ENCODE measurements at regions of chr11 and their contacts with region 1.

Region 1: GRCh38 chr11:22787551-22788162 is 41.9 kb downstream of the SVIP start:
- DNase-seq: peak in 2 of 3 donors; percentile 3 to 24
- H3K4me3 ChIP-seq: no peak overlapping the region
- H3K4me3 Mint-ChIP-seq: no peak overlapping the region
- H3K27ac ChIP-seq: no peak overlapping the region
- H3K27ac Mint-ChIP-seq: no peak overlapping the region
- H3K4me1 ChIP-seq: no peaks in the 10 kb centered on the region
- H3K4me1 Mint-ChIP-seq: no peaks in the 10 kb centered on the region
- H3K27me3 ChIP-seq: no peaks in the 10 kb centered on the region
- H3K27me3 Mint-ChIP-seq: peaks cover 0 to 2% (median 0%) of the 10 kb centered on the region in 3 donors
- CTCF ChIP-seq: peak; percentile 81

Region 2: DNA sequence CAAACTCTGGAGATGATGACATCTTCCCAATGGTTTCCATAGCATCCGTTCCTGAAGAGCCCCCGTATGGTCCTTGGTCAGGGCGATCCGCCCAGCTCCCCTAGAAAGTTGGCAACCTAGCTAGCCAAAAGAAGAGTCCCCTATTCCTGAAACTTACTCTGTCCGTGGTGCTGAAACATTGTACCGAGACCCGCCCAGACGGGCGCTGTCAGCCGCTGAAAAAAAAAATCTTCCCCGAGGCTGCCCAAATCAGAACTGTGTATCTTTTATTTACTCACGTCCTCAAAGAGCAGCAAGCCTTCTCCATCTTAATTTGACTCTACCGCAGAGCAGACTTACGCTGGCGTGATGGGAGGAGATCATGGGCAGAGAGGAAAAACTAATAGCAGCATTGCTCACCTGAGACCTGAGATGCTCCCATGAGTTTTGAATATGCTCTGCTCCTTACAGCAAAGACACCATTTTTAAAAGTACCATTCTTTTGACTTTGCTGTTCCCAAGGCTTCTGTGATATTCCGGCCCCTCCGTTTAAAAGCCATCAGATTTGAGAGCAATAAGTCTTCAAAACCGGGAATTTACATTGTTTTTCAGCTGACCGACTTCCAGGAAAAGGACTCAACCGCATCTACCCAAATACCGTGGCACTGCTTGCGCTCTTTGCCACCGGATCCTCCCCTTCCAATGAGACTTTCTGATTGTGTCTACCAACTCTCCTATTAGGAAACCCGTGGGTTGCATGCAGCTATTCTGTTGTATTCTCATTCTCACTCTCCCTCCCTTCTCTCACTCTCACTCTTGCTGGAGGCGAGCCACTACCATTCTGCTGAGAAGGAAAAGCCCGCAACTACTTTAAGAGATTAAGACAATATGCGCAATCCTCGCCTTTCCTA is 449.8 kb before region 1 on chr11 and contains the start of gene SLC17A6:
- intact Hi-C with region 1: loop called (anchors 10 kb)
- DNase-seq: no peak
- H3K4me3 ChIP-seq: no peak within 1 kb of the TSS
- H3K4me3 Mint-ChIP-seq: peak within 1 kb of the TSS in 1 of 2 donors; percentile 67
- H3K27ac ChIP-seq: no peak within 1 kb of the TSS
- H3K27ac Mint-ChIP-seq: no peak within 1 kb of the TSS
- H3K4me1 ChIP-seq: no peaks in the 10 kb centered on the region
- H3K4me1 Mint-ChIP-seq: no peaks in the 10 kb centered on the region
- H3K27me3 ChIP-seq: peaks cover 60 to 69% of the 10 kb centered on the region in 2 donors
- H3K27me3 Mint-ChIP-seq: peaks cover 58 to 62% (median 61%) of the 10 kb centered on the region in 3 donors
- CTCF ChIP-seq: no peak
- polyA plus RNA-seq, gene SLC17A6: not detected

Region 3: DNA sequence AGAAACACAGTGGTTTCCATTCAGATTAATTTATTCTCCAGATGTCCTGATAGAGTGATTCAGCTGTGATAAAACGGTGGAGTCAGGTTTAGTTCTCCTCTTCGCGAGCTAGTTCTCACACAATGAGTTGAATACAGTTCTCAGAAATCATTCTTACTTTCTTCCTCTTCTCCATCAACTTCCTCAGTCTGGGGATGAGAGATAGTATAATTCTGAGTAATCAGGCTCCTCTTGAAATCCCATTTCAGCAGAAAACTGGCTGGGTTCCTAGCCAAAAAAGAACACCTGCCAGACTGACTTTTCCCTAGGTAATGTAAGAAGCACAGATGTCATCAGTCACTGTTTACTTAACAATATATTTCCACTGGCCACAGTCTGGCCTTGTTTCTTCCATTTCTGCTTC is 34.7 kb before region 1 on chr11:
- intact Hi-C with region 1: no loop called
- DNase-seq: no peak
- H3K4me3 ChIP-seq: no peak overlapping the region
- H3K4me3 Mint-ChIP-seq: no peak overlapping the region
- H3K27ac ChIP-seq: no peak overlapping the region
- H3K27ac Mint-ChIP-seq: no peak overlapping the region
- H3K4me1 ChIP-seq: no peaks in the 10 kb centered on the region
- H3K4me1 Mint-ChIP-seq: no peaks in the 10 kb centered on the region
- H3K27me3 ChIP-seq: no peaks in the 10 kb centered on the region
- H3K27me3 Mint-ChIP-seq: peaks cover 0 to 2% (median 0%) of the 10 kb centered on the region in 3 donors
- CTCF ChIP-seq: no peak